CD8-positive, alpha-beta T cell (primary cell): ENCODE measurements at regions of chr11 and their contacts with region 1.

Region 1: GRCh38 chr11:108135845-108136544 is 14.6 kb downstream of the ACAT1 start:
- DNase-seq: peak in 3 of 9 experiments; percentile 22 to 45 (median 31)
- ATAC-seq: peak; percentile 36
- H3K4me3 ChIP-seq: no peak overlapping the region
- H3K4me3 Mint-ChIP-seq: no peak overlapping the region
- H3K27ac ChIP-seq: no peak overlapping the region
- H3K27ac Mint-ChIP-seq: peak overlapping the region; percentile 66
- H3K4me1 ChIP-seq: no peaks in the 10 kb centered on the region
- H3K4me1 Mint-ChIP-seq: peaks cover 14% of the 10 kb centered on the region
- H3K27me3 ChIP-seq: no peaks in the 10 kb centered on the region
- H3K27me3 Mint-ChIP-seq: no peaks in the 10 kb centered on the region
- CTCF ChIP-seq: no peak

Region 2: DNA sequence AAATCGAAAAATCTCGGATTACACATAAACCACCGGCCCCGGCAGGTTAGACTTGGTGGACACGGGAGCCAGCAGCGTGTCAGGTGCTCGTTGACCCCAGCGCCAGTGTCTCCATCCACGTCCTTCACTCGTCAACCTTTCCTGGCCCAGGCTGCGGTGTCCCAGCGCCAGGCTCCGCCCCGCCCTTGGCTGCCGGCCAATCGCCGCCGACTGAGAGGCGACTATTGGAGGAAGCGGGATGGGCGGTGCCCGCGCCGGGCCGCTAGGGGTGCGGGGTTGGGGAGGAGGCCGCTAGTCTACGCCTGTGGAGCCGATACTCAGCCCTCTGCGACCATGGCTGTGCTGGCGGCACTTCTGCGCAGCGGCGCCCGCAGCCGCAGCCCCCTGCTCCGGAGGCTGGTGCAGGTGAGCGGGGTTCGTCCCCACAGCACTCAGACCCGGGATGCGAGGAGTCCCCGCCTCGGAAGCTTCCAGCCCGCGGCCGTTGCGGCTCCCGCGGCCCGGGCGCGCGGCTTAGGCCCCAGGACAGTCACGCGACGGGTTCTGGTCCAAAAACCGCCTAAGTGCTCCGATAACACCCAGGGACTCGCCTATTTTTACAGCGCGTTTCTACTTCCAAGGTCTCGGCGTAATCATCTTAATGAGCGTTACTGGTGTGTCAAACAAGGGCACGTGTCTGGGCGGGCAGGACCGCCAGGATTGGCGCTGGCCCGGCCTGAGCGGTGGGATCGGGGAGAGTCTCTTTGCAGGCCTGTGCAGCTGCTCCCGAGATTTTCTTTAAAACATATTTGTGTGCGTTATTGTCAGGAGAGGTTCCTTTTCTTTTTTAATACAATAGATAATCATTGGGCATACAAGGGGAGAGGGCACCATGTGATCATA is 14.5 kb before region 1 on chr11 and contains the start of gene ACAT1:
- CTCF ChIA-PET with region 1: interaction called, 3 read pairs
- POLR2A ChIA-PET with region 1: interaction called, 4 read pairs
- intact Hi-C with region 1: loop called in 1 of 2 experiments (anchors 1 kb)
- DNase-seq: peak; percentile 89 to 98 (median 97)
- ATAC-seq: peak; percentile 98
- H3K4me3 ChIP-seq: peak within 1 kb of the TSS; percentile 82 to 89
- H3K4me3 Mint-ChIP-seq: peak within 1 kb of the TSS; percentile 88
- H3K27ac ChIP-seq: peak within 1 kb of the TSS; percentile 59 to 70
- H3K27ac Mint-ChIP-seq: peak within 1 kb of the TSS; percentile 78
- H3K4me1 ChIP-seq: peaks cover 31% of the 10 kb centered on the region
- H3K4me1 Mint-ChIP-seq: peaks cover 43% of the 10 kb centered on the region
- H3K27me3 ChIP-seq: no peaks in the 10 kb centered on the region
- H3K27me3 Mint-ChIP-seq: no peaks in the 10 kb centered on the region
- CTCF ChIP-seq: no peak
- total RNA-seq, gene ACAT1: 14.2 to 15.0 TPM